Endothelial cell of umbilical vein (primary cell): ENCODE measurements at regions of chr4 and their contacts with region 1.

Region 1: DNA sequence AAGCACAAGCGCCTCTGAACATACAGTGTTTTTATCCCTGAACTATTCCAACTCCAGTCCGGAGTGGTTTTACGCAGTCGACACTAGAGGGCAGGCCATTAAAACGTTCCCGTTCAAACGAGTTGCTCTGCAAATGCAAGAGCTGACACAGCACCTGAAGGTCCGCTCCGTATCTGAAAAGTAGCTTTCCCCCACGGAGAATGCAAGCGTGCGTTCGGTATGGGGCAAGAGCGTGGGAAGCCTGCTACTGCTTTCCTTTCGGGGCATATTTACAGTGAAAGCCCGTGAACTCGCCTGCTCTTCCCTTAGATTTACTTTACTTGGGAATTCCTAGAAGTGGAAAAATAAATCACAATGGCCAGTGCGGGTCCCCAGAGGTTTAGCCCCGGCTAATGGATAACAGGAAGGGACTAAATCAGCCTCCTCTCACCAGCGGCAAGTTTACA is 190.8 kb downstream of the TSPAN5 start:
- DNase-seq: peak; percentile 86
- H3K4me3 ChIP-seq: peak overlapping the region in 2 of 3 experiments; percentile 9 to 62
- H3K27ac ChIP-seq: no peak overlapping the region
- H3K4me1 ChIP-seq: peaks cover 17% of the 10 kb centered on the region
- H3K27me3 ChIP-seq: no peaks in the 10 kb centered on the region
- CTCF ChIP-seq: peak; percentile 78 to 83
- POLR2A ChIP-seq: no peak

Region 2: DNA sequence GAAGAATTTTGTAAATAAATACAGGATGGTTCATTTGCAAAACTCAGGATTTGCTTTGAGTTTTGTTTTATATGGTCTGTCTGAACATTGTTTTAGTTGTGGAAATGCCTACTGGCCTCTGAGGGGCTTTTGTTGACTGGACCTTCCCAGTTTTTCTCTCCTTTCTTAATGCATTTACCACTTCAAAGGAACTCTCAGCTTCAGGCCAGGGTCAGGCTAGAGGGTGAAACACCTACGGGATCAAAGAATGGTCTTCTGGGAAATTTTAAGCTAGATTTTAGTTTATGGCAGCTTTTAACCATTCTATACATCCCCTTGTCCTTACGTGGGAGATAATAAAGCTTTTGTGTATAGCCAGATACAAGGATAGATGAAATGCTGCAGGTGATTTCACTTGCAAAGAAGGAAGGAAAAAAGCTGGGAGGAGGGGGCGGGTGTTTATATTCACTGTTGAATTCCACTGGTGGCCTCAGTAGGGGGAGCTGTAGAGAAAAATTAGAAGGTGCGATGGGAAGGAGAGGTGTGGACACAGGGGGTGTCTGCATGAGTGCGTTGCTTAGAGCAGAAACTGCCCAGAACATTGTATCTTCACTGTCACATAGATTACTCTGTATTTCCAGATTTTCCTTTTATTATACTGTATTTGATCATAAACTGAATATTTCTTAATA is 38.9 kb after region 1 on chr4:
- CTCF ChIA-PET with region 1: interaction called, 3 read pairs
- POLR2A ChIA-PET with region 1: no interaction called
- dilution Hi-C with region 1: no loop called
- intact Hi-C with region 1: loop called (anchors 2 kb)
- DNase-seq: peak; percentile 23
- H3K4me3 ChIP-seq: no peak overlapping the region
- H3K27ac ChIP-seq: no peak overlapping the region
- H3K4me1 ChIP-seq: no peaks in the 10 kb centered on the region
- H3K27me3 ChIP-seq: no peaks in the 10 kb centered on the region
- CTCF ChIP-seq: peak; percentile 15 to 22
- POLR2A ChIP-seq: no peak

Region 3: GRCh38 chr4:98626350-98626749 is 158.7 kb after region 1 on chr4:
- CTCF ChIA-PET with region 1: interaction called, 26 read pairs
- POLR2A ChIA-PET with region 1: no interaction called
- dilution Hi-C with region 1: no loop called
- intact Hi-C with region 1: loop called (anchors 1 kb)
- DNase-seq: peak; percentile 91
- H3K4me3 ChIP-seq: peak overlapping the region in 1 of 3 experiments; percentile 0
- H3K27ac ChIP-seq: peak overlapping the region; percentile 74
- H3K4me1 ChIP-seq: peaks cover 45% of the 10 kb centered on the region
- H3K27me3 ChIP-seq: no peaks in the 10 kb centered on the region
- CTCF ChIP-seq: peak in 1 of 2 donors; percentile 4
- POLR2A ChIP-seq: peak; percentile 25

Region 4: DNA sequence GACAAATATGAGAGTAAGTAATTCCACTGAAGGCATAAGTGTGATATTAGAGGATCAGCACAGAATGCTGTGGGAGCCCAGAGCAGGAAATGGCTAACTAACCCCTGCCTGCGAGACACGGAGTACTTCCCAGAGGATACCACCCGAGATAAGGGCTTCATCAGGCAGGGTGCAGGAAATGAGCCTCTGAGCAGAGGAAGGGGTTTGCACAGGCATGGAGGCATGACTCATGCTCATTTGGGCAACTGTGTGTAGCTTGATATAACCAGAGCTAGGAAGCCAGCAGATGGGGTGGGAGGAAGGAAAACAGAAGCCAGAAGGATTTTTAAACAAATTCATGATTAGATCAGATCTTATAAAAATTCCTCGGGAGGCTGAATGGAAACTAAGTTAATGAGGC is 260.8 kb after region 1 on chr4:
- CTCF ChIA-PET with region 1: interaction called, 27 read pairs
- POLR2A ChIA-PET with region 1: no interaction called
- dilution Hi-C with region 1: no loop called
- intact Hi-C with region 1: loop called (anchors 2 kb)
- DNase-seq: peak; percentile 96
- H3K4me3 ChIP-seq: peak overlapping the region in 1 of 3 experiments; percentile 7
- H3K27ac ChIP-seq: peak overlapping the region; percentile 72
- H3K4me1 ChIP-seq: peaks cover 18% of the 10 kb centered on the region
- H3K27me3 ChIP-seq: no peaks in the 10 kb centered on the region
- CTCF ChIP-seq: peak in 1 of 2 donors; percentile 0
- POLR2A ChIP-seq: no peak

Region 5: GRCh38 chr4:98838977-98839618 is 371.4 kb after region 1 on chr4:
- CTCF ChIA-PET with region 1: interaction called, 16 read pairs
- POLR2A ChIA-PET with region 1: no interaction called
- dilution Hi-C with region 1: no loop called
- intact Hi-C with region 1: no loop called
- DNase-seq: peak; percentile 27
- H3K4me3 ChIP-seq: no peak overlapping the region
- H3K27ac ChIP-seq: no peak overlapping the region
- H3K4me1 ChIP-seq: peaks cover 4% of the 10 kb centered on the region
- H3K27me3 ChIP-seq: no peaks in the 10 kb centered on the region
- CTCF ChIP-seq: no peak
- POLR2A ChIP-seq: no peak

Region 6: GRCh38 chr4:98995183-98996055 is 527.8 kb after region 1 on chr4 and contains the start of gene METAP1:
- CTCF ChIA-PET with region 1: interaction called, 13 read pairs
- POLR2A ChIA-PET with region 1: no interaction called
- dilution Hi-C with region 1: no loop called
- intact Hi-C with region 1: loop called (anchors 1 kb)
- DNase-seq: peak; percentile 91
- H3K4me3 ChIP-seq: peak within 1 kb of the TSS; percentile 64 to 93 (median 73)
- H3K27ac ChIP-seq: peak within 1 kb of the TSS; percentile 44
- H3K4me1 ChIP-seq: peaks cover 6% of the 10 kb centered on the region
- H3K27me3 ChIP-seq: no peaks in the 10 kb centered on the region
- CTCF ChIP-seq: peak; percentile 39 to 68
- POLR2A ChIP-seq: peak; percentile 81
- total RNA-seq, gene METAP1: 38.8 and 39.8 TPM in 2 replicates